Activated CD4-positive, alpha-beta T cell treated with anti-CD3 and anti-CD28 coated beads, Interleukin-2, amount 10 ng/mL, durations not matched to agents 7 days and 5 days (primary cell): ENCODE measurements at regions of chr20 and their contacts with region 1.

Region 1: DNA sequence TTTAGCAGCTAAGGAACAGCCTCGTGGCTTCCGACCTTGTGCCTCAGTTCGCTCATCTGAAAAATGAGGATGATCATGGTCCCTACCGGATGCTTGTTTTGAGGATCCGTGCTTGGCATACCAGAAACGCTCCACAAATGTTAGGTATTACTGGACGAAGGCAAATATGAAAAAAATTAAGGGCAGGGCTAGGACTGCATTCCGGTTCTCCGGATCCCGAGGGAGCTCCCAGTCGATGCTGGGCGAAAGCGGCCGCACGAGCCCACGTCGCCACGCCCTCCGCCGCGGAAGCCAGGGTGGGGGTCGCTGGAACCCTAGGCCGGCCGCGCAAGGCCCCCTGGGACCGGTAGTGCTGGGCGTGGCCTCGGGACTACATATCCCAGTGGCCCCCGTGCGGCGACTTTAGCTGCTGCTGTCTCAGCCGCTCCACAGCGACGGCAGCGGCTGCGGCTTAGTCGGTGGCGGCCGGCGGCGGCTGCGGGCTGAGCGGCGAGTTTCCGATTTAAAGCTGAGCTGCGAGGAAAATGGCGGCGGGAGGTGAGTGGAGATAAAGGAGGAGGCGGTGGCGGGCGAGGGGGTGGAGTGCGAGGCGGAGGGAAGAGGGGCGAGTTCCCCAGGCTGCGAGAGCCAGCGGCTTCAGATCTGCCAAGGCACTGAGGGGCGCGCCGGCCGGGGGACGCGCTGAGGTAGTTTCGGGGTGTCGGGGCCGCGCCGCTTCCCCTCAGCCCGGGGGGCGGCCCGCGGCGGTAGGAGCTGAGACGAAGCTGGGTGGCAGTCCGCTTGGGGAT is at the start of gene NCOA3:
- DNase-seq: peak; percentile 93
- H3K4me3 Mint-ChIP-seq: peak within 1 kb of the TSS; percentile 99
- H3K27ac Mint-ChIP-seq: peak within 1 kb of the TSS; percentile 99
- H3K4me1 Mint-ChIP-seq: peaks cover 56% of the 10 kb centered on the region
- H3K27me3 Mint-ChIP-seq: no peaks in the 10 kb centered on the region
- total RNA-seq, gene NCOA3: 59.1 to 70.6 TPM

Region 2: DNA sequence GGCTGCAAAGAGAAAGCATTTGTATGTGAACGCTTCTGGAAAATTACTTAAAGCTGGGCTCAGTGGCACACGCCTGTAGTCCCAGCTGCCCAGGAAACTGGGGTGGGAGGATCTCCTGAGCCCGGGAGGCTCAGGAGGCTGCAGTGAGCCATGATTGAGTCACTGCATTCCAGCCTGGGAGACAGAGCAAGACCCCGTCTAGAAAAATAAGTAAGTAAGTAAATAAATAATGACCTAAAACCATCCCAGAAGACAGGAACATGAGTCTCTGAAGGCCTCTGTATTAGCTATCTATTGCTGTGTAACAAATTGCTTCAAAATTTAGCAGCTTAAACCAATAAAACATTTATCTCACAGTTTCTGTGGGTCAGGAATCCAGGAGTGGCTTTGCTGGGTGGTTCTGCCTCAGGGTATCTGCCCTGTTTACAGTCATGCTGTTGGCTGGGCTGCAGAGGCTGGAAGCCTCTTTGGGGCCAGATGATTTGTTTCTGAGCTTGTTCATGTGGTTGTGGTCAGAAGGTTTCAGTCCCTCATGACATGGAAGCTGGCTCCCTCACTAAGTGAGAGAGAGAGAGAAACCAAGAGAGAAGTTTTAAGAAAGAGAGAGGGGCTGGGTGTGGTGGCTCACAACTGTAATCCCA is 48.4 kb before region 1 on chr20:
- CTCF ChIA-PET with region 1: no interaction called
- POLR2A ChIA-PET with region 1: no interaction called
- DNase-seq: peak; percentile 59
- H3K4me3 Mint-ChIP-seq: peak overlapping the region; percentile 13
- H3K27ac Mint-ChIP-seq: peak overlapping the region; percentile 75
- H3K4me1 Mint-ChIP-seq: peaks cover 48% of the 10 kb centered on the region
- H3K27me3 Mint-ChIP-seq: no peaks in the 10 kb centered on the region

Region 3: GRCh38 chr20:47487175-47487917 is 14.3 kb before region 1 on chr20:
- CTCF ChIA-PET with region 1: interaction called, 22 read pairs
- POLR2A ChIA-PET with region 1: no interaction called
- DNase-seq: peak; percentile 80
- H3K4me3 Mint-ChIP-seq: peak overlapping the region; percentile 52
- H3K27ac Mint-ChIP-seq: peak overlapping the region; percentile 91
- H3K4me1 Mint-ChIP-seq: peaks cover 62% of the 10 kb centered on the region
- H3K27me3 Mint-ChIP-seq: no peaks in the 10 kb centered on the region

Region 4: DNA sequence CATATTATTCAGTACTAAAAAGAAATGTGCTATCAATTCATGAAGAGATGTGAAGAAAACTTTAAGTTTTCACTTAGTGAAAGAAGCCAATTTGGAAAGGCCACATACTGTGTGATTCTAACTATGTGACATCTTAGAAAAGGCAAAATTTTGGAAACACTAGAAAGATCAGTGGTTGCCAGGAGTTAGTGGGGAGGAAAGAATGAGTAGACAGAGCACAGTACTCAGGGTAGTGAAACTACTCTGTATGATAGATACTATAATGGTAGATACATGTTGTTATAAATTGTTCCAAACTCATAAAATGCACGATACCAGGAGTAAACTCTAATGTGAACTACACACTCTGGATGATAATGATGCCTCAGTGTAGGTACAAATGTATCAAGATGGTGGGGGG is 14.2 kb after region 1 on chr20:
- CTCF ChIA-PET with region 1: interaction called, 20 read pairs
- POLR2A ChIA-PET with region 1: no interaction called
- DNase-seq: no peak
- H3K4me3 Mint-ChIP-seq: no peak overlapping the region
- H3K27ac Mint-ChIP-seq: no peak overlapping the region
- H3K4me1 Mint-ChIP-seq: peaks cover 29% of the 10 kb centered on the region
- H3K27me3 Mint-ChIP-seq: no peaks in the 10 kb centered on the region